ENCODE measurements at regions of chr21 and their contacts with region 1.

Region 1: GRCh38 chr21:36319765-36320420 is at the start of gene MORC3:
- DNase-seq: peak; percentile 97
- H3K4me3 Mint-ChIP-seq: peak within 1 kb of the TSS; percentile 93
- H3K27ac Mint-ChIP-seq: peak within 1 kb of the TSS; percentile 95
- H3K4me1 Mint-ChIP-seq: peaks cover 29% of the 10 kb centered on the region
- H3K27me3 Mint-ChIP-seq: peaks cover 4% of the 10 kb centered on the region
- total RNA-seq, gene MORC3: 22.1 and 23.5 TPM in 2 replicates

Region 2: DNA sequence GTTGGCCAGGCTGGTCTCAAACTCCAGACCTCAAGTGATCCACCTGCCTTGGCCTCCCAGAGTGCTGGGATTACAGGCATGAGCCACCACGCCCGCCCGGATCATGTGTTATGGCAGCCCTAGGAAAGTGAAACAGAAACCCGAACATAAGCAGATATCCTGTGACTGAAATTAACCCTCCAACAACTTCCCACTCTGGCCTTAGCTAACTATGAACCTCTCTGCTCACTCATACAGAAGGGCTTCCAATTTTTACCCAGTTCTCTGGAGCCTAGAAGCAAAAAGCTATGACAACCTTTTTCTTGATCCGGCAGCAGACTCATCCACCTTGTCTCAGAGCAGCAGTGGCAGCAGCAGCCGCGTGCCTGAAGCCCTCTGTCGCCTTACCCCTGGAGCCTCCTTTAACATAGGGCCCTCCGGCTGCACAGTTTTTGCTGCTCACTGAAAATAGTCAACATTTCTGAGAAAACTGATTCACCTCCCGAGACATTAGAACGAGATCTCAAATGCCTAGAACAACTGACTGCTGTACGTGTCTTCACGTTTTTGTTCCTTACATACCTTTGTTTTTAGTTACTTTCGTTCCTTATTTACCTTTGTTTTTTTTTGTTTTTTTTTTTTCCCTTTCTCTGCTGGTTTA is 240.8 kb before region 1 on chr21:
- intact Hi-C with region 1: no loop called
- DNase-seq: peak; percentile 24
- H3K4me3 Mint-ChIP-seq: peak overlapping the region; percentile 69
- H3K27ac Mint-ChIP-seq: peak overlapping the region; percentile 90
- H3K4me1 Mint-ChIP-seq: peaks cover 46% of the 10 kb centered on the region
- H3K27me3 Mint-ChIP-seq: no peaks in the 10 kb centered on the region

Region 3: DNA sequence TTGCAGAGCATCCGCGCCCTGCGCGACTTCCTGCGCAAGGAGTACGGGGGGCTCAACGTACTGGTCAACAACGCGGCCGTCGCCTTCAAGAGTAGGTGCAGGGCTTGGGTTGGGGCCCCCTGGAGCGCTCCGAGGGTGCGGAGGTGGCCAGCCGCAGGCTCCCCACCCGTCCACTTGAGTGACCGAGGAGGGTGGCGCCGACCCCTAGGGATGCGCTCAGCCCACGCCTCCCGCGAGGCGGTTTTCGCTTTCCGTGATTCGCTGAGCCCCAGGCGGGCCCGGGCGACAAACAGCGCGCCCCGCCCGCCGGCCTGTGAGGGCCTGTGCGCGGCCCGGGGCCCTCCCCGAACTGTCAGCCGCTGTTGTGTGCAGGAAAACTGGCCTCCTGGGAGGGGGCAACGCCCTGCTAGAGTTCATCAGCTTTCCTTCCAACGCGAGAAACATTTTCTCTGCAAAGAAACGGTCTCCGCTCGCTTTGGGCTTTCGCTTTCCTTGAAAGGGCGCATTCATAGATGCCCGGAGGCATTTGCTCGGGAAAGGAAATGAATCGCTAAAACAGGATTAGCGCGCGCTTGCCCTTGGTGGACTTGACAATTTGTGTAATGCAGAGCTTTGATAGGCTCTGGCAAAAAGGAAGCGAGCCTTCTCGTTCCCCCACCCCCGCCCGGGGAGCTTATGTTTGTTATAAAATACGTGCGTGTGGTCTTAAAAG is 184.3 kb before region 1 on chr21:
- intact Hi-C with region 1: loop called (anchors 1 kb)
- DNase-seq: peak; percentile 68
- H3K4me3 Mint-ChIP-seq: peak overlapping the region; percentile 94
- H3K27ac Mint-ChIP-seq: peak overlapping the region; percentile 94
- H3K4me1 Mint-ChIP-seq: peaks cover 22% of the 10 kb centered on the region
- H3K27me3 Mint-ChIP-seq: peaks cover 5% of the 10 kb centered on the region

Region 4: GRCh38 chr21:36188081-36188681 is 131.7 kb before region 1 on chr21:
- intact Hi-C with region 1: no loop called
- DNase-seq: no peak
- H3K4me3 Mint-ChIP-seq: no peak overlapping the region
- H3K27ac Mint-ChIP-seq: no peak overlapping the region
- H3K4me1 Mint-ChIP-seq: peaks cover 22% of the 10 kb centered on the region
- H3K27me3 Mint-ChIP-seq: no peaks in the 10 kb centered on the region

Region 5: GRCh38 chr21:36260030-36260787 is 59.7 kb before region 1 on chr21:
- intact Hi-C with region 1: loop called (anchors 1 kb)
- DNase-seq: peak; percentile 31
- H3K4me3 Mint-ChIP-seq: peak overlapping the region; percentile 70
- H3K27ac Mint-ChIP-seq: peak overlapping the region; percentile 53
- H3K4me1 Mint-ChIP-seq: peaks cover 19% of the 10 kb centered on the region
- H3K27me3 Mint-ChIP-seq: no peaks in the 10 kb centered on the region

Region 6: DNA sequence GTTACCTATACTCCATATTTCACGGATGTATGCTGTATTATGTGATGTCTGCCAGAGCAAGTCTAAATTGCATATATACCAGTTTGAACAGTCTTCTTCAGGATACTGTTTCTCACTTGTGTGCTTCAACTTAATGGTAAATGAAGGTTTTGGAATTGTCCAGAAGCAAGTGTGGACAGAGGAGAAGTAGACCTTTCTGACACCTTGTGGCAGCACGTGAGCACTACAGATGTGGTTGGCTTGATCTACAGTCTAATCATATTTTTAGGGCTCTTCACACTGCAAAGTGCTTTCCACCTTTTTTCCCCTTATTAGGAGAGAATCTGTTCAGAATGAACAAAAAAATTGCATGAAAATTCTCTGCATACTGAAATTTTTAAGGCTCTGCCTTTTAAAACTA is 11.0 kb after region 1 on chr21:
- intact Hi-C with region 1: loop called (anchors 1 kb)
- DNase-seq: no peak
- H3K4me3 Mint-ChIP-seq: no peak overlapping the region
- H3K27ac Mint-ChIP-seq: no peak overlapping the region
- H3K4me1 Mint-ChIP-seq: peaks cover 13% of the 10 kb centered on the region
- H3K27me3 Mint-ChIP-seq: no peaks in the 10 kb centered on the region

Region 7: DNA sequence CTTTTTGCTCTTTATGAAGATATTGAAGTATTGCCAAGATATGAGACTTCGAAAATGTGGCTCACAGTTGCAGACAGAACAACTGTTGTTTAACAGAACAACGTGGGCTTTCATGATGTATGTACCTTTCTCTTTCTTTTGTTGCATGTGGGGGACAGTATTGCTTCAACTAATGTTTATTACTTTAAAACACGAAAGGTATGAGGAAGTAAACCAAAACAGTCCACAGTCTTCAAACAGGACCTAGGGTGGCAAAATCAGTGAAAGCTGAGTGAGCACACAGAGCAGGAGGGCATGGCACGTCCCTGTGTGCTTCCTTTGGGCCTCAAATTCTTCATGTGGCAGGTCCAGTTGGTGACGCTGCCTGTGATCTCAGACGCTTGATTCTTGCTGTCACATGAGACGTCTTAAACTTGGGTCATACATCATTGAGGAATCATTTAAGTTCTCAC is 57.5 kb after region 1 on chr21:
- intact Hi-C with region 1: no loop called
- DNase-seq: no peak
- H3K4me3 Mint-ChIP-seq: no peak overlapping the region
- H3K27ac Mint-ChIP-seq: no peak overlapping the region
- H3K4me1 Mint-ChIP-seq: peaks cover 5% of the 10 kb centered on the region
- H3K27me3 Mint-ChIP-seq: no peaks in the 10 kb centered on the region

Region 8: GRCh38 chr21:37072988-37073416 is 753.1 kb after region 1 on chr21 and contains the starts of genes PIGP and TTC3:
- intact Hi-C with region 1: loop called (anchors 10 kb)
- DNase-seq: peak; percentile 93
- H3K4me3 Mint-ChIP-seq: peak within 1 kb of the TSS; percentile 95
- H3K27ac Mint-ChIP-seq: peak within 1 kb of the TSS; percentile 95
- H3K4me1 Mint-ChIP-seq: peaks cover 50% of the 10 kb centered on the region
- H3K27me3 Mint-ChIP-seq: peaks cover 2% of the 10 kb centered on the region
- total RNA-seq, gene PIGP: 18.2 and 20.1 TPM in 2 replicates
- total RNA-seq, gene TTC3: 61.8 and 69.3 TPM in 2 replicates

Measured in activated T-helper 1 cell treated with anti-CD3 and anti-CD28 coated beads, Interleukin-12 subunit alpha, Interleukin-12 subunit beta, Interleukin-2, Interleukin-4 antibody, amounts not matched to agents 30 ng/mL and 10 ng/mL and 1 ng/mL, durations not matched to agents 14 hours and 24 hours and 36 hours (primary cell).